ENCODE measurements at regions of chr7 and their contacts with region 1.

Region 1: GRCh38 chr7:27172823-27173510 is 1.2 kb downstream of the HOXA10 start:
- DNase-seq: peak; percentile 31
- ATAC-seq: peak; percentile 14
- H3K4me3 Mint-ChIP-seq: no peak overlapping the region
- H3K27ac Mint-ChIP-seq: no peak overlapping the region
- H3K4me1 Mint-ChIP-seq: peaks cover 15% of the 10 kb centered on the region
- H3K27me3 Mint-ChIP-seq: peaks cover 56% of the 10 kb centered on the region

Region 2: GRCh38 chr7:27251652-27252590 is 79.0 kb after region 1 on chr7:
- CTCF ChIA-PET with region 1: no interaction called
- POLR2A ChIA-PET with region 1: no interaction called
- intact Hi-C with region 1: loop called in 1 of 2 experiments (anchors 2 kb)
- DNase-seq: no peak
- ATAC-seq: no peak
- H3K4me3 Mint-ChIP-seq: no peak overlapping the region
- H3K27ac Mint-ChIP-seq: no peak overlapping the region
- H3K4me1 Mint-ChIP-seq: peaks cover 10% of the 10 kb centered on the region
- H3K27me3 Mint-ChIP-seq: peaks cover 68% of the 10 kb centered on the region